Pancreas (tissue), 10 donors: ENCODE measurements at regions of chr3 and their contacts with region 1.

Region 1: DNA sequence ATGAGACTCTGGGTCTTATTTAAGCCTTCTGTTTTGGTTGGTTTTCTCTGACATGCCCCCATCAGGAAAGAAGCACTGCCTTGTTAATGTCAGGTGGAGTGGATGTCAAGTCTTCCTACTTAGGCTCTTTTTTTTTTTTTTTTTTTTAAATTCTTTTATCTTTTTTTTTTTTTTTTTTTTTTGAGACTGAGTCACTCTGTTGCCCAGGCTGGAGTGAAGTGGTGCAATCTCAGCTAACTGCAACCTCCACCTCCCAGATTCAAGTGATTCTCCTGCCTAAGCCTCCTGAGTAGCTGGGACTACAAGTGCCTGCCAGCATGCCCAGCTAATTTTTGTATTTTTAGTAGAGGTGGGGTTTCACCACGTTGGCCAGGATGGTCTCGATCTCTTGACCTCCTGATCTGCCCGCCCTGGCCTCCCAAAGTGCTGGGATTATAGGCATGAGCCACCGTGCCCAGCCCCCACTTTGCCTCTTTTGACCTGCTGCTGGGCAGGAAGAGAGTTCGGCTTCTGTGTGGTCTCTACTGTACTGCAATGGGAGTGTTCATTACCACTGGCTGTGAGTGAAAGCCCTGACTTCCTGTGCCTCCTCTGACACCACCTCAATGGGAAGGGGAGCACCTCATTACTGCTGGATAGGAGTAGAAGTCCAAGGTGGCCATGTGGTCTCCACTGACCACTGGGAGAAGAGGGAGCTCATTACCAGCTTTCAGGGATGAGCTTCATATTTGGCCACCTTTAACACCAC is 10.9 kb downstream of the CTDSPL start:
- DNase-seq: no peak
- ATAC-seq: no peak
- H3K4me3 ChIP-seq: no peak overlapping the region
- H3K27ac ChIP-seq: no peak overlapping the region
- H3K4me1 ChIP-seq: no peaks in the 10 kb centered on the region
- H3K27me3 ChIP-seq: no peaks in the 10 kb centered on the region
- CTCF ChIP-seq: no peak

Region 2: DNA sequence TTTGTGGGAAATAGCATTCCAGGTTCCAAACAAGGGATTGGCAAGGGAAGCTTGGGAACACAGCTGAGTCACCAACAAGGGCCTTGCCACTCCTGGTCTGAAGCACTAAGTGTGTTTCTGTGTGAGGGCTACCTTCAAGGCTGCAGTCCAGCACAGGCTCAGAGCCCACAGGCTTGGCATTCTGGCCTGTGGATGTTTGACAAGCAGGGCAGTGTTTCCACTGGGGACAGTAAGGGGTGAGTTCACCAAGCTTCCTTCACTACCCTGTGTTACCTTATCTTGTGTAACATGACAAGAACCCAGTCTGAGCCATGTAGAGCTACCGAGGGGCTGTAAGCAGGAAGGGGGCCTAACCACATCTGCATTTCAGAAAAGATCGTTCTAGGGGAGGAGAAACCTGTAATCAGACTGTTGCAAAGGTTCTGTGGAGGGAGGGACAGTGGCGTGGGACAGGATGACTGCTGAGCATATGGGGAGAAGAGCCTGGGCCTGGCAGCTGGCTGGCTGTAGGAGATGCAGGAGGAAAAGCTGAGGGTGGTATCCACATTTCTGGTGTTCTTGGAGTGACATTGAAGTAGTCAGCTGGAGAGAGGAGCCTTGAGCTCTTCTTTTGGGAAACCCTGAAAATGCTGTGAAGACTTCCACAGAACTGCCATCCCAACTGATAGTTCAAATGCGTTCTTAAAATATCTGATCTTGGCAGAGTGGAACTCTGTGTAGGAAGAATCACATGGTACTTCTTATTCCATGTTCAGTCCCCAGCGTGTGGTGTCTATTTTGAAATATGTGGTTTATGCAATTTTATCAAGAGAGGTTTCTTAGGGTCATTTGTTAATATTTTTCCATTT is 50.4 kb after region 1 on chr3:
- intact Hi-C with region 1: loop called in 1 of 3 experiments (anchors 10 kb)
- DNase-seq: peak in 2 of 6 donors; percentile 26 to 41
- ATAC-seq: peak; percentile 27 to 71 (median 46)
- H3K4me3 ChIP-seq: no peak overlapping the region
- H3K27ac ChIP-seq: peak overlapping the region in 2 of 4 donors; percentile 13 to 23
- H3K4me1 ChIP-seq: peaks cover 0 to 34% (median 8%) of the 10 kb centered on the region in 3 donors
- H3K27me3 ChIP-seq: no peaks in the 10 kb centered on the region
- CTCF ChIP-seq: no peak